T-cell (primary cell): ENCODE measurements at regions of chr6 and their contacts with region 1.

Region 1: GRCh38 chr6:27111743-27112142 is 135.8 kb upstream of the PRSS16 start:
- DNase-seq: no peak
- ATAC-seq: no peak
- H3K4me3 ChIP-seq: no peak overlapping the region
- H3K4me3 Mint-ChIP-seq: no peak overlapping the region
- H3K27ac ChIP-seq: no peak overlapping the region
- H3K27ac Mint-ChIP-seq: no peak overlapping the region
- H3K4me1 ChIP-seq: no peaks in the 10 kb centered on the region
- H3K4me1 Mint-ChIP-seq: no peaks in the 10 kb centered on the region
- H3K27me3 ChIP-seq: peaks cover 0 to 20% of the 10 kb centered on the region in 2 experiments
- H3K27me3 Mint-ChIP-seq: peaks cover 26 to 28% of the 10 kb centered on the region in 2 donors

Region 2: GRCh38 chr6:26604026-26604425 is 507.7 kb before region 1 on chr6:
- CTCF ChIA-PET with region 1: no interaction called
- POLR2A ChIA-PET with region 1: interaction called in 1 of 2 experiments, 10 read pairs
- DNase-seq: no peak
- ATAC-seq: no peak
- H3K4me3 ChIP-seq: no peak overlapping the region
- H3K4me3 Mint-ChIP-seq: no peak overlapping the region
- H3K27ac ChIP-seq: no peak overlapping the region
- H3K27ac Mint-ChIP-seq: peak overlapping the region; percentile 3 to 44
- H3K4me1 ChIP-seq: no peaks in the 10 kb centered on the region
- H3K4me1 Mint-ChIP-seq: peaks cover 7 to 26% (median 12%) of the 10 kb centered on the region in 3 donors
- H3K27me3 ChIP-seq: no peaks in the 10 kb centered on the region
- H3K27me3 Mint-ChIP-seq: no peaks in the 10 kb centered on the region